GM10248 (cell line): ENCODE measurements at regions of chr2 and their contacts with region 1.

Region 1: GRCh38 chr2:228819701-228820100 is 451.4 kb downstream of the PID1 start:
- DNase-seq: no peak
- CTCF ChIP-seq: no peak

Region 2: DNA sequence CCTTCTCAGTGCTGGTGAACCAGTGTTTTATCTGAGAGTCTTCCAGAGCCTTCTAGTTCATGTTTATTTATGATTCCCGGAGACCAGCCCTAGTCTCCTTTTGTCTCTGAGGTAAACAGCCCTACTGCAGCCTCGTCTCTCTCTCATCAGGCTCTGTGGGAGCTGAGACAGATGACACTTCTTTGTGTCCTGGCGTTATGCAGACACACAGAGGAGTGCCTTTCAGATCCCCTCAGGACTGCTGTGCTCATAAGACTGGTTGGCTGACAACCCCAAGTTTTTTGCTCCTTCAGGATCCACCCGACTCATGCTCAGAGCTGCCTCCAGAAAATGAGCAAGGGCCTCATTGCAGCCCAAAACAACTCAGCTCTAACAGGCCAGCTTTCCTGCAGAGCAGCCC is 114.4 kb before region 1 on chr2:
- CTCF ChIA-PET with region 1: no interaction called
- POLR2A ChIA-PET with region 1: no interaction called
- DNase-seq: no peak
- CTCF ChIP-seq: no peak

Region 3: GRCh38 chr2:228801451-228801850 is 18.2 kb before region 1 on chr2:
- CTCF ChIA-PET with region 1: interaction called, 10 read pairs
- POLR2A ChIA-PET with region 1: no interaction called
- DNase-seq: no peak
- CTCF ChIP-seq: no peak